ENCODE measurements at regions of chr14 and their contacts with region 1.

Region 1: DNA sequence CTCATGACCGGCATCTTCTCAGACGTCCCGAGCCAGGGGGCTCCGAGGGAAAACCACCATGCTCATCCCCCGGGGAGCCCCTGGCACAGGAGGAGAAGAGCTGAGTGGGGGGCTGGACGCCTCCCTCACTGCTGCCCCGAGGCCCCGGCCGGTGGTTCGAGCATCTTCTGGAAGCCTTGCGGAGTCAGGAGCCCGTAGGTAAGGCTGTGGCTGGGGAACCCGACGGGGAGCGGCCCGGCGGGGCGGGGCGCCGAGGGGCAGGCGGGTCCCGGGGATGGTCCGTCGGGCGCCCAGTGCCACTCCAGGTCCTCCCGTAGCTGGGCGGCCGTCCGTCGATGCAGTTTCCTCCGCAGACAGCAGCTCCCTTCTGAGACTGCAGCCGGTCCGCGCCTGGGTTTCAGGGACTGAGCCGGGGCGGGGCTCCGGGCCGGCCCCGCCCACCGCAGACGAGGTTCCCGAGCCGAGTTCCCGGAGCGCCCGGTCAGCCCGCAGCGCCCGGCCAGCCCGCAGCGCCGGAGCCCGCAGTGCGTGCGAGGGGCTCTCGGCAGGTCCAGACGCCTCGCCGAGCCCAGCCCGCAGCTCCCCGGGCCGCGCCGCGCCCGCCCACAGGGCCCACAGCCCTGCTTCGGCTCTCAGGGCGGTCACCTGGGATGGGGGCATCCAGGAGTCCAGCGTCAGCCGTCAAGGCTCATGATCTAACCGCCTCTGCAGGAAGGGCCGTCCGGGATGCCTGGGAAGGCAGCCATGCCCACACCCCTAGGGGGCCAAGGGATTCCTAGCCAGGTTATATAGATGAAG is at the start of gene PGF:
- DNase-seq: peak; percentile 74 to 80
- H3K4me3 ChIP-seq: peak within 1 kb of the TSS; percentile 60
- H3K4me3 Mint-ChIP-seq: peak within 1 kb of the TSS; percentile 43
- H3K27ac Mint-ChIP-seq: no peak within 1 kb of the TSS
- H3K4me1 ChIP-seq: peaks cover 40% of the 10 kb centered on the region
- H3K4me1 Mint-ChIP-seq: peaks cover 8% of the 10 kb centered on the region
- H3K27me3 ChIP-seq: no peaks in the 10 kb centered on the region
- H3K27me3 Mint-ChIP-seq: no peaks in the 10 kb centered on the region
- CTCF ChIP-seq: no peak
- total RNA-seq, gene PGF: 8.9 and 9.1 TPM in 2 replicates

Region 2: DNA sequence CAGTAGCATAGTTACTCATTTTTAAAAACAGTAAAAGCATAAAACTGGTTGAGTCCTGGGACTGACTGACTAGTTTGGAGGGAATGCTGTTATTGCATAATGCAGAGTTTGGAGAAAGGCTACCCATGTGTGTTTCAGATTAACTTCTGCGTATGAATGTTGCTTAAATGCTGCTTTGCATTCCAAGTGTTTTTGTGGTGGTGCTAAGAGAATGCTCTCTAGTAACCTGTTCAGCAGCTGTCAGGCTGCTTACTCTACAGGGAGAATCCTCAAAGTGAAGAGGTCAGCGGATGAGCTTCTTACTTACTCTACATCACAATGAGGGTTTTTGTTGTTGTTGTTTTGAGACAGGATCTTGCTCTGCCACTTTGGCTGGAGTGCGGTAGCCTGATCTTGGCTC is 69.4 kb before region 1 on chr14:
- CTCF ChIA-PET with region 1: no interaction called
- POLR2A ChIA-PET with region 1: no interaction called
- intact Hi-C with region 1: no loop called
- DNase-seq: no peak
- H3K4me3 ChIP-seq: no peak overlapping the region
- H3K4me3 Mint-ChIP-seq: no peak overlapping the region
- H3K27ac Mint-ChIP-seq: no peak overlapping the region
- H3K4me1 ChIP-seq: peaks cover 18% of the 10 kb centered on the region
- H3K4me1 Mint-ChIP-seq: peaks cover 46% of the 10 kb centered on the region
- H3K27me3 ChIP-seq: no peaks in the 10 kb centered on the region
- H3K27me3 Mint-ChIP-seq: no peaks in the 10 kb centered on the region
- CTCF ChIP-seq: no peak

Region 3: GRCh38 chr14:74974364-74975058 is 19.1 kb after region 1 on chr14:
- CTCF ChIA-PET with region 1: interaction called, 4 read pairs
- POLR2A ChIA-PET with region 1: interaction called, 6 read pairs
- intact Hi-C with region 1: loop called (anchors 1 kb)
- DNase-seq: peak; percentile 70 to 84
- H3K4me3 ChIP-seq: no peak overlapping the region
- H3K4me3 Mint-ChIP-seq: peak overlapping the region; percentile 39
- H3K27ac Mint-ChIP-seq: peak overlapping the region; percentile 66
- H3K4me1 ChIP-seq: peaks cover 41% of the 10 kb centered on the region
- H3K4me1 Mint-ChIP-seq: peaks cover 15% of the 10 kb centered on the region
- H3K27me3 ChIP-seq: no peaks in the 10 kb centered on the region
- H3K27me3 Mint-ChIP-seq: no peaks in the 10 kb centered on the region
- CTCF ChIP-seq: no peak

Region 4: DNA sequence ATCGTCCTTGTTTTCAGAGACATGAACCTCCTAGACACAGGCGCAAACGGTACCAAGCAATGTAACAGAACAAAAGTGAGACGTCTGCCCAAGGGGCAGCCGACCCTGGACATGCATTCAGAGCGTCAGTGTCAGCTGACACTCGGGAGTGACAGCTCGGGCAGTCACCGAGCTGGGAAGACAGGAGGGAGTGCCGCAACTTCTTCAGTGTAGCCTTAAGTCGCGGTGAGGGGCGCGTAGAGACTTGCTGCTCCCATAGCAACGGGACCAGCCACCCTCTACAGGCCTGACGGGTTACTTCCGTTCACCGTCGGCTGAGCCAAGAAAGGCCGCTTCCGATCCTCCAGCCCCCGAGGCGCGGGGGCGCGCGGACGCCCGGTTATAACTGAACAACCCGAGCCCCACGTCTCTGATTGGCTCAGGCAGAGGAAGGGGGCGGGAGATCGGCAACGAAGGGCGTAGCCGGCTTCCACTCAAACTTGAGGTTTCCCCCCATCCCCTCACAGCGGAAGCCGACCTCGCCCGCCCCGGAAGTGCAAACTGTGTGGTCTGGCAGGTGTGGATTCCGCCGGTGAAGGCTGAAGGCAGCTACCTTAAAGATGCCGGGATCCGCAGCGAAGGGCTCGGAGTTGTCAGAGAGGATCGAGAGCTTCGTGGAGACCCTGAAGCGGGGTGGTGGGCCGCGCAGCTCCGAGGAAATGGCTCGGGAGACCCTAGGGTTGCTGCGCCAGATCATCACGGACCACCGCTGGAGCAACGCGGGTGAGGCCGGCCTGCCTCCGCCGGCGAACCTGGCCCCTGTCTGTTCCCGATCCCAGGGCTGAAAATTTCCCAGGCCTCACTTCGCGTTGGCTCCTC is 47.2 kb after region 1 on chr14 and contains the start of gene EIF2B2:
- CTCF ChIA-PET with region 1: no interaction called
- POLR2A ChIA-PET with region 1: no interaction called
- intact Hi-C with region 1: loop called (anchors 1 kb)
- DNase-seq: peak; percentile 98
- H3K4me3 ChIP-seq: peak within 1 kb of the TSS; percentile 82
- H3K4me3 Mint-ChIP-seq: peak within 1 kb of the TSS; percentile 87
- H3K27ac Mint-ChIP-seq: peak within 1 kb of the TSS; percentile 86
- H3K4me1 ChIP-seq: peaks cover 6% of the 10 kb centered on the region; the same call in 1 of the 2 replicates
- H3K4me1 Mint-ChIP-seq: peaks cover 7% of the 10 kb centered on the region
- H3K27me3 ChIP-seq: no peaks in the 10 kb centered on the region
- H3K27me3 Mint-ChIP-seq: no peaks in the 10 kb centered on the region
- CTCF ChIP-seq: peak in 1 of 2 experiments; percentile 29
- total RNA-seq, gene EIF2B2: 48.8 and 54.4 TPM in 2 replicates

Region 5: DNA sequence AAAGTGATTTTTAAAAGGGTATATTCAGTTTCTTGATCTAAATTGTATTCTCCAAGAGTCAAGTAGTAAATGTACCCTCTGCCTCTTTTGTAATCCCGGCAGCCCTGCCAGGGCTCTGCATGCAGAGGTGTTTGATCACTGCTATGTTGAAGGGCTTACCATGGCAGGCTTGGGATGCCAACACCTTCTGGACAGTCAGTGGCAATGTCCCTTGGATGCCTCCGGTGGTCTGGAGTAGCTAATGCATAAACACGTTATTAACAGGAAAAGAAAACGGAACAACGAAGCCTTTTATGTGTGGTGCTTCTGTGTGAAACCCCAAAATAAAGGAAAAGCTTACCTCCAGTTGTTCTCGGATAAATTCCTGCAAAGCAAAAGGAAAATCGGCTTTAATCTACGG is 67.2 kb after region 1 on chr14:
- CTCF ChIA-PET with region 1: no interaction called
- POLR2A ChIA-PET with region 1: no interaction called
- intact Hi-C with region 1: loop called (anchors 1 kb)
- DNase-seq: peak; percentile 47 to 50
- H3K4me3 ChIP-seq: no peak overlapping the region
- H3K4me3 Mint-ChIP-seq: no peak overlapping the region
- H3K27ac Mint-ChIP-seq: no peak overlapping the region
- H3K4me1 ChIP-seq: peaks cover 14% of the 10 kb centered on the region
- H3K4me1 Mint-ChIP-seq: peaks cover 18% of the 10 kb centered on the region
- H3K27me3 ChIP-seq: no peaks in the 10 kb centered on the region
- H3K27me3 Mint-ChIP-seq: no peaks in the 10 kb centered on the region
- CTCF ChIP-seq: peak; percentile 51 to 62

Region 6: GRCh38 chr14:75069045-75069810 is 113.8 kb after region 1 on chr14 and contains the start of gene ZC2HC1C:
- CTCF ChIA-PET with region 1: no interaction called
- POLR2A ChIA-PET with region 1: interaction called, 4 read pairs
- intact Hi-C with region 1: loop called (anchors 5 kb)
- DNase-seq: peak; percentile 94 to 97
- H3K4me3 ChIP-seq: peak within 1 kb of the TSS; percentile 54
- H3K4me3 Mint-ChIP-seq: no peak within 1 kb of the TSS
- H3K27ac Mint-ChIP-seq: no peak within 1 kb of the TSS
- H3K4me1 ChIP-seq: peaks cover 5% of the 10 kb centered on the region
- H3K4me1 Mint-ChIP-seq: peaks cover 6% of the 10 kb centered on the region
- H3K27me3 ChIP-seq: no peaks in the 10 kb centered on the region
- H3K27me3 Mint-ChIP-seq: no peaks in the 10 kb centered on the region
- CTCF ChIP-seq: no peak
- total RNA-seq, gene ZC2HC1C: 2.5 and 3.8 TPM in 2 replicates

Measured in Caco-2 (cell line).